Activated T-helper 1 cell treated with anti-CD3 and anti-CD28 coated beads, Interleukin-12 subunit alpha, Interleukin-12 subunit beta, Interleukin-2, Interleukin-4 antibody, amounts not matched to agents 30 ng/mL and 10 ng/mL and 1 ng/mL, durations not matched to agents 14 hours and 24 hours and 36 hours (primary cell): ENCODE measurements at regions of chr2 and their contacts with region 1.

Region 1: GRCh38 chr2:160406591-160407392 is 86.8 kb downstream of the RBMS1 start:
- DNase-seq: peak; percentile 66
- H3K4me3 Mint-ChIP-seq: peak overlapping the region; percentile 90
- H3K27ac Mint-ChIP-seq: peak overlapping the region; percentile 92
- H3K4me1 Mint-ChIP-seq: peaks cover 83% of the 10 kb centered on the region
- H3K27me3 Mint-ChIP-seq: no peaks in the 10 kb centered on the region

Region 2: GRCh38 chr2:160269803-160270570 is 136.8 kb before region 1 on chr2:
- intact Hi-C with region 1: loop called (anchors 5 kb)
- DNase-seq: peak; percentile 25
- H3K4me3 Mint-ChIP-seq: peak overlapping the region; percentile 62
- H3K27ac Mint-ChIP-seq: no peak overlapping the region
- H3K4me1 Mint-ChIP-seq: peaks cover 33% of the 10 kb centered on the region
- H3K27me3 Mint-ChIP-seq: peaks cover 16% of the 10 kb centered on the region

Region 3: DNA sequence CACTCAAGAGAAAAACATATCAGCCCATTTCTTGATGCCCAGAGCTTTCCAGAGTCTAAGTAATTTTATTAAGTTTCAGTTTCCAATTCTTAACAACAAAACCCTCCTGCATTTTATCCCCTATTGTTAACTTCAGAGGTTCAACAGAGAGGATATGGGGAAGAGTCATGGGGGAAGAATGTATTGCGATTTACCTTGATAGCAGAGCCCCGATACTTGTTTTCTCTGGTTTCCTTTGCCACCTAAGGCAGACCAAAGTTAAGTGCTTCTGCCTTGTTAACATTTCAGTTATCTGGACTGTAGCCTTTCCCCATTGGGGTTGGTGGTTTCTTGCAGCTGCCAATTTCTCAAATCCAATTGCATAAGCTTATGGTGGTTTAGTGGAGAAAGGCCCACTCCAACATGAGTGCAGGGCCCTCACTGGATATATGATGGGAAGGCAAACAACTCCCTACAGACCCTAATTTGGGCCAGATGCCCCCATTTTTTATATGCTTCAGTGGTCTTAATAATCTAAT is 124.7 kb before region 1 on chr2:
- intact Hi-C with region 1: no loop called
- DNase-seq: no peak
- H3K4me3 Mint-ChIP-seq: no peak overlapping the region
- H3K27ac Mint-ChIP-seq: no peak overlapping the region
- H3K4me1 Mint-ChIP-seq: peaks cover 19% of the 10 kb centered on the region
- H3K27me3 Mint-ChIP-seq: no peaks in the 10 kb centered on the region

Region 4: GRCh38 chr2:160394153-160394552 is 12.6 kb before region 1 on chr2:
- intact Hi-C with region 1: loop called (anchors 1 kb)
- DNase-seq: no peak
- H3K4me3 Mint-ChIP-seq: peak overlapping the region; percentile 61
- H3K27ac Mint-ChIP-seq: peak overlapping the region; percentile 46
- H3K4me1 Mint-ChIP-seq: peaks cover 49% of the 10 kb centered on the region
- H3K27me3 Mint-ChIP-seq: no peaks in the 10 kb centered on the region

Region 5: GRCh38 chr2:160472839-160473251 is 66.1 kb after region 1 on chr2:
- intact Hi-C with region 1: loop called (anchors 2 kb)
- DNase-seq: no peak
- H3K4me3 Mint-ChIP-seq: peak overlapping the region; percentile 49
- H3K27ac Mint-ChIP-seq: peak overlapping the region; percentile 59
- H3K4me1 Mint-ChIP-seq: peaks cover 67% of the 10 kb centered on the region
- H3K27me3 Mint-ChIP-seq: no peaks in the 10 kb centered on the region

Region 6: DNA sequence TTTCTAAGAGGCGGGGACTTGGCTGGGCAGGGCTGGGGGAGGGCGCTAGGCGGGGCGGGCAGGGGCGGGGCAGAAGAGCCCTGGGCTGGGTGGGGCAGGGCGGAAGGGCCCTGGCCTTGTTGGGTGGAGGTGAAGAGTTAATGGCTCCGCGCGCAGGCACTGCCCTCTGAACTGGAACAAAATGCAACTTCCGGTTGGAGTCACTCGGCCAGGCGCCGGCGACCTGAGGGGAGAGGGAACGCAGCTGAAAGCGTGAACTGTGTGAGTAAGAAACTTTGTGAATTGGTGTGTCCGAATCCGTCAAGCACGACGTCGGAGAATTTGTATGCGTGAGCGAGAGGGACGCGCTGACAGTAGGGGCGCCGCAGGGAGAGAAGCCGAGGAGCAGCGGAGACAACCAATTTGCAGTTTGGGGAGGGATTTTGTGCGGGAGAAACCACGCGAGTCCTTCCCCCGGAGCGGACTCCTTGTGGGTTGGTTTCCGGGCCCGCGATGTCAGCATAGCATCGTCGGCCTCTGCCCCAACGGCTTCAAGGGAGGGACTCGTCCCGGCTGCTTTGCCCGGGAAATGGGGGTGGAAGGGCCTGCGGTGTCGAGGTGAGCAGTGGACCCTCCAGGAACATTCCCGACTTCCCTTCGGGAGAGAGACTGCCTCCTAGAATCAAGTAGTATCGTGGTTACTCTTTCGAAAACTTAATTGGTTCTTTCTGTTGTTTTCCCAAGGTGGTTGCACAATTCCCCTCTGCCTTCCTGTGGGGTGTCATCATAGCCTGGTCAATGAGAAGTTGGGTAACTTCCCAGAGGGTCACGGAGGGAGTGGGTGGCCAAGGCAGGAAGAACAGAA is 753.7 kb after region 1 on chr2 and contains the start of gene TANK:
- intact Hi-C with region 1: loop called (anchors 10 kb)
- DNase-seq: peak; percentile 88
- H3K4me3 Mint-ChIP-seq: peak within 1 kb of the TSS; percentile 97
- H3K27ac Mint-ChIP-seq: peak within 1 kb of the TSS; percentile 99
- H3K4me1 Mint-ChIP-seq: peaks cover 81% of the 10 kb centered on the region
- H3K27me3 Mint-ChIP-seq: no peaks in the 10 kb centered on the region
- total RNA-seq, gene TANK: 136 and 141 TPM in 2 replicates